ENCODE measurements at regions of chr19 and their contacts with region 1.

Region 1: GRCh38 chr19:42254989-42255765 is at the start of gene ERF:
- DNase-seq: peak; percentile 65
- ATAC-seq: peak; percentile 69
- H3K4me3 ChIP-seq: peak within 1 kb of the TSS; percentile 94 to 96
- H3K27ac ChIP-seq: peak within 1 kb of the TSS; percentile 99
- H3K4me1 ChIP-seq: peaks cover 45 to 62% of the 10 kb centered on the region in 2 experiments
- H3K27me3 ChIP-seq: no peaks in the 10 kb centered on the region
- CTCF ChIP-seq: no peak
- POLR2A ChIP-seq: peak; percentile 53
- RAD21 ChIP-seq: no peak
- total RNA-seq, gene ERF: 96.1 TPM

Region 2: GRCh38 chr19:41753936-41754529 is 501.1 kb before region 1 on chr19:
- CTCF ChIA-PET with region 1: no interaction called
- POLR2A ChIA-PET with region 1: no interaction called
- RAD21 ChIA-PET with region 1: no interaction called
- intact Hi-C with region 1: no loop called
- DNase-seq: peak; percentile 39
- ATAC-seq: peak; percentile 92
- H3K4me3 ChIP-seq: no peak overlapping the region
- H3K27ac ChIP-seq: no peak overlapping the region
- H3K4me1 ChIP-seq: peaks cover 0 to 7% of the 10 kb centered on the region in 2 experiments; a peak in 1 of 4 replicates
- H3K27me3 ChIP-seq: peaks cover 56% of the 10 kb centered on the region
- CTCF ChIP-seq: peak; percentile 50 to 86 (median 85)
- POLR2A ChIP-seq: no peak
- RAD21 ChIP-seq: no peak

Region 3: GRCh38 chr19:42092350-42092749 is 162.8 kb before region 1 on chr19:
- CTCF ChIA-PET with region 1: no interaction called
- POLR2A ChIA-PET with region 1: no interaction called
- RAD21 ChIA-PET with region 1: no interaction called
- intact Hi-C with region 1: no loop called
- DNase-seq: no peak
- ATAC-seq: peak; percentile 86
- H3K4me3 ChIP-seq: no peak overlapping the region
- H3K27ac ChIP-seq: no peak overlapping the region
- H3K4me1 ChIP-seq: peaks cover 0 to 30% of the 10 kb centered on the region in 2 experiments; a peak in 2 of 4 replicates
- H3K27me3 ChIP-seq: no peaks in the 10 kb centered on the region
- CTCF ChIP-seq: peak; percentile 67 to 86 (median 84); a peak in 5 of 6 replicates
- POLR2A ChIP-seq: no peak
- RAD21 ChIP-seq: peak; percentile 78

Region 4: DNA sequence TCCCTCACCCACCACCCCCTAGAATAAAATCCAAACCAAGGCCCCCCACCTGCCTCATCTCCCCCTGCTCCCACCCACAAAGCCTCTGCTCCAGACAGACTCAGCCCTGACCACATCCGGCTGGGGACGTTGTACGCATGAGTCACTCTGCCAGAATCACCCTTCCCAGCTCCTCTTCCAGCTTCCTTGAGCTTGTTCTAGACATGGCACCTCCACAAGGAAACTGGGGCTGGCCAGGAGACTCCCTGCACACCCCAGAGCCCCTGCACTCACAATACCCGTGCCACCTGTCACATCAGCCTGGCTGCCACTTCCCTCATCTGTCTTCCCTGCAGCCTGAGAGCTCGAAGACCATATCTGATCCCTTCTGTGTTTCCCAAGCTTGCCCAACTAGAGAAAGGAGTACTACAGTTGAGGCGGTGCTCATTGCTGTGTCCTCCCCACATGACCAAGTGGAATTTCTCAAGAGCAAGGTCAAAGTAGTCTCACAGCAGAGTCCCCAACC is 47.4 kb before region 1 on chr19:
- CTCF ChIA-PET with region 1: no interaction called
- POLR2A ChIA-PET with region 1: no interaction called
- RAD21 ChIA-PET with region 1: no interaction called
- intact Hi-C with region 1: no loop called
- DNase-seq: no peak
- ATAC-seq: peak; percentile 87
- H3K4me3 ChIP-seq: peak overlapping the region in 1 of 2 experiments; percentile 37; a peak in 2 of 4 replicates
- H3K27ac ChIP-seq: peak overlapping the region; percentile 62
- H3K4me1 ChIP-seq: peaks cover 11 to 38% of the 10 kb centered on the region in 2 experiments
- H3K27me3 ChIP-seq: no peaks in the 10 kb centered on the region
- CTCF ChIP-seq: no peak
- POLR2A ChIP-seq: no peak
- RAD21 ChIP-seq: no peak

Region 5: DNA sequence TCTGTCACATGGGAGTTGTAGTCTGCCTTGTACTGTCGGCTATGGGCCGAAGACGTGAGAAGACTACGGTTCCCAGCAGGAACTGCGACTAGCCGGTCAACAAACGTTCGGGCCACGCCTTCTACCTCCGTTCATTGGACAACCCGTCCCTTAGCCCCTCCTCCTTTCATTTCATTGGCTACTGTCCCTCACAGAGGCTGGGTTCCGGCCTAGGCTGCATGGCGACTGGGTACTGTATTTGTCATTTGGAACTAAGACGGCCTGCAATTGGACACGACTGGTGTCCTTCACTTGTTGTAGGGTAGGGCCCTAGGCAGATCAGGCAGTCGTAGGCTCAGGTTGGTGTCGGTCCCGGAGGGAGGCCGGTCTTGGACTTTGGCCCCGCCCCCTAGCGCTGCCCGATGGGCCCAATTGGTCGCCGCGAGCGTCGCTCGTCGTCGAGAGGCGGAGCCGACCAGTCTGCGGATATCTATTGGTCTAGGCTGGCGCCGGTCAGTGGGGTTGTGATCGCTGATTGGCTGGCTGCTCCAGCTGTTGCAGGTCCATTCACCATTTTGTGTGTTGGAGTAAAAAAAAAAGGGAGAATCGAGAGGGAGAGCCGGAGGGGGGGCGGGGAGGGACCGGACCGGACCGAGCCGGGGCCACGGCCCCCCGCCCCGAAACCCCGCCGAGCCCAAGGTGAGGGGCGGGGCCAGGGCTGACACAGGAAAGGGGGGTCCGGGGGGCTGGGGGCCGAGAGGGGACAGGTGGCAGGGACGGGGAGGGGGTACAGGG is 13.7 kb after region 1 on chr19 and contains the start of gene CIC:
- CTCF ChIA-PET with region 1: interaction called, 3 read pairs
- POLR2A ChIA-PET with region 1: interaction called, 3 read pairs
- RAD21 ChIA-PET with region 1: interaction called in 1 of 2 experiments, 3 read pairs
- intact Hi-C with region 1: loop called (anchors 1 kb)
- DNase-seq: peak; percentile 100
- ATAC-seq: peak; percentile 87
- H3K4me3 ChIP-seq: peak within 1 kb of the TSS; percentile 74 to 80
- H3K27ac ChIP-seq: peak within 1 kb of the TSS; percentile 90
- H3K4me1 ChIP-seq: peaks cover 23 to 32% of the 10 kb centered on the region in 2 experiments
- H3K27me3 ChIP-seq: no peaks in the 10 kb centered on the region
- CTCF ChIP-seq: no peak
- POLR2A ChIP-seq: no peak
- RAD21 ChIP-seq: no peak
- total RNA-seq, gene CIC: 52.0 TPM

Region 6: GRCh38 chr19:42283143-42284065 is 28.2 kb after region 1 on chr19:
- CTCF ChIA-PET with region 1: interaction called, 18 read pairs
- POLR2A ChIA-PET with region 1: interaction called, 9 read pairs
- RAD21 ChIA-PET with region 1: no interaction called
- intact Hi-C with region 1: no loop called
- DNase-seq: peak; percentile 69
- ATAC-seq: peak; percentile 73
- H3K4me3 ChIP-seq: peak overlapping the region; percentile 29 to 59
- H3K27ac ChIP-seq: peak overlapping the region; percentile 94
- H3K4me1 ChIP-seq: peaks cover 41 to 69% of the 10 kb centered on the region in 2 experiments
- H3K27me3 ChIP-seq: no peaks in the 10 kb centered on the region
- CTCF ChIP-seq: no peak
- POLR2A ChIP-seq: no peak
- RAD21 ChIP-seq: no peak

Measured in HCT116 (cell line).